GM13976 (cell line): ENCODE measurements at regions of chrX and their contacts with region 1.

Region 1: GRCh38 chrX:13515211-13515930 is 54.0 kb upstream of the EGFL6 start:
- DNase-seq: no peak
- CTCF ChIP-seq: no peak

Region 2: DNA sequence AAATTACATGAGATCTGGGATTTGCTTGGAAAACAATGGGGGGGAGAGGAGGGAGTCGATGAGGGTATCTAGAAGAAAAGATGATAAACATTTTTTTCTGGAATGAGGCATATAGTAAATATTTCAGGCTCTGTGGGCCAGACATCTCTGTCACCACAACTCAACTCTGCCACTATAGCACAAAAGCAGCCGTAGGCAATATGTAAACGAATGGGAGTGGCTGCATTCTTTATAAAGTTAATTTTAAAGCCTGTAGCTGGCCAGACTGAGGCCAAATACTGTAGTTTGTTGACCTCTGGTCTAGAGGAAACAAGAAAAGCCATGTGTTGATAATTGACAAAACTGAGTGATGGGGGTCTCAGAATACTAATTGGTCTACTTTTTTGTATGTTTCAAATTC is 123.5 kb after region 1 on chrX:
- in situ Hi-C with region 1: loop called (anchors 5 kb)
- DNase-seq: no peak
- CTCF ChIP-seq: no peak

Region 3: GRCh38 chrX:13716455-13716854 is 201.1 kb after region 1 on chrX:
- in situ Hi-C with region 1: no loop called
- DNase-seq: no peak
- CTCF ChIP-seq: no peak